Right lobe of liver (tissue), 6 donors: ENCODE measurements at regions of chr15 and their contacts with region 1.

Region 1: DNA sequence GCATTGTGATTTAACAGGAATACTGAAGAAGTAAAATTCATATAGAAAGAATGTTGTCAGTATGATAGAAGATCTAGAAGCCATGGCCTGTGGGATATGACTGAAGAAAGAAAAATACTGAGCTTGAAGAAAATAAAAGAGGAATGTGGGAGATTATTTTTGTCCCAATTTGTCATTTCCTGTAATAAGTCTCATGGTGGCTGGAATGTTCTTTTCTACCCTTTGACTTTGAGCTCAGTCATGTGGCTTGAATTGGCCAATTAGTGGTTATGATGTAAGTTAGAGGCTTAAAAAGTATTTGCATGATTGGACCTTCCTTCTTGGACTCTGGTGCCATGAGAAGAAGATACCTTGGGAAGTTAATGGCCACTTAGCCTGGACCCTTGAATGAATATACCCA is 14.1 kb downstream of the APH1B start:
- DNase-seq: no peak
- ATAC-seq: peak in 1 of 4 donors; percentile 16
- H3K4me3 ChIP-seq: no peak overlapping the region
- H3K27ac ChIP-seq: peak overlapping the region in 1 of 3 donors; percentile 38
- H3K4me1 ChIP-seq: no peaks in the 10 kb centered on the region
- H3K27me3 ChIP-seq: no peaks in the 10 kb centered on the region
- CTCF ChIP-seq: no peak
- POLR2A ChIP-seq: no peak

Region 2: DNA sequence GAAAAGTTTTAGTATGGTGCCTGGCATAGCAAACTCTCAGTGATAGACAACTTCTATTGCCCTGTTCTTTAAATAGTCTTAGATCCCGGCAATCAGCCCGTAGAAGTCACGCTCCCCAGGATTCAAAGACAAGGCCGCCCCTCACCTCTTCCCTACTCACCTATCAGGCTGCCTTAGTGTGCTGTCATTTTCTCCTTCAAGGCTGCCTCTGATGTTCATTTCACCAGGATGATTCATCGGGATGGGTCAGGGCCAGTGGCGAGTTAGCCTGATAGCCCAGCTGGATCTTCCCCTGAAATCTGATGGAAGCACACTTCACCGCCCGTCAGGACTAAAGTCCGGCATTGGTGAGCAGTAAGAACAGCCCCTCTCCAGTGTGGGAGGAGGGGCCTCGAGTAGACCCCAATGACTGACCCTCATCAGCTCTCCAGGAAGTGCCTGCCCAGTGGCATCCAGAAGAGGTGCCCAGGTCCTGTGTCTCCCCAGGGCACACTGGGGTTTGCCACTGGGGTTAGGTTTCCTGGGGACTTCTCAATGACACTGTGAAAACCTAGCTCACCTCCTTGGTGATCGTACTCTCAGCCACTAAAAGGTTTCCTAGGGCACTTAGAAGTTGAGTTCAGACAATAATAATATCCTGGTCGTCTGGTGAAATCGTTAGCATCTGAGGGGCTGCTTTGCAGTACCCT is 211.4 kb before region 1 on chr15:
- intact Hi-C with region 1: no loop called
- DNase-seq: no peak
- ATAC-seq: peak in 1 of 4 donors; percentile 54
- H3K4me3 ChIP-seq: no peak overlapping the region
- H3K27ac ChIP-seq: no peak overlapping the region
- H3K4me1 ChIP-seq: peaks cover 0 to 8% (median 0%) of the 10 kb centered on the region in 4 donors
- H3K27me3 ChIP-seq: no peaks in the 10 kb centered on the region
- CTCF ChIP-seq: no peak
- POLR2A ChIP-seq: no peak

Region 3: DNA sequence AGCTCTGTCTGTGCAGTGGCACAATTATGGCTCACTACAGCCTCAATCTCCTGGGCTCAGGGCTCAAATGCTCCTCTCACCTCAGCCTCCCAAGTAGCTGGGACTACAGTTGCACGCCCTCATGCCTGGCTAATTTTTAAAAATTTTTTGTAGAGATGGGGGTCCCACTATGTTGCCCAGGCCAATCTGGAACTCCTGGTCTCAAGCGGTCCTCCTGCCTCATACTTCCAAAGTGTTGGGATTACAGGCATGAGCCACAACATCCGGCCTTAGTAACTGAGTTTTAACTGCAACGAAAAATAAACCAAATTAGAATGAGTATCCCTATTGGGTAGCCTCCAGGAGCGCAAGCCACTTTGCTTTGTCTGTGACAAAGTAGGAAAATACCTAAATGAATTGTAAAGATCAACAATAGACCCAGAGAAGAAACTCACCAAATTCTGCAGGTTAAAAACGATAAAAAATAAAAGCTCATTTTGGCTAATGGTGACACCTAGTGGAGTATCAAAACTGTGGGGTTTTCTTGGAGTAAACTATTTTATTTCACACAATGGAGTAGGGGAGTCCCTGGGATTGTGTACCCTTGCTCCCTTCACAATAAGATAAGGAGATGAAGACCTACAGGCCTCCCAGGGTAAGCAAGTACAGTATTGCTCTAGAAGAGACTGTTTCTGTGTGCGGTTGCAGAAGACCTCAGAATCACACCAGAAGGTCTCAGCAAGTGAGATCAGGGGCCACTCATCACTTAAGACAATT is 111.2 kb after region 1 on chr15:
- intact Hi-C with region 1: loop called in 1 of 2 experiments (anchors 5 kb)
- DNase-seq: peak in 1 of 3 donors; percentile 3
- ATAC-seq: peak; percentile 67 to 81 (median 72)
- H3K4me3 ChIP-seq: no peak overlapping the region
- H3K27ac ChIP-seq: no peak overlapping the region
- H3K4me1 ChIP-seq: peaks cover 0 to 5% (median 0%) of the 10 kb centered on the region in 4 donors
- H3K27me3 ChIP-seq: no peaks in the 10 kb centered on the region
- CTCF ChIP-seq: peak; percentile 63 to 72 (median 72)
- POLR2A ChIP-seq: no peak